Ascending aorta (tissue), 2 donors: ENCODE measurements at regions of chr2 and their contacts with region 1.

Region 1: DNA sequence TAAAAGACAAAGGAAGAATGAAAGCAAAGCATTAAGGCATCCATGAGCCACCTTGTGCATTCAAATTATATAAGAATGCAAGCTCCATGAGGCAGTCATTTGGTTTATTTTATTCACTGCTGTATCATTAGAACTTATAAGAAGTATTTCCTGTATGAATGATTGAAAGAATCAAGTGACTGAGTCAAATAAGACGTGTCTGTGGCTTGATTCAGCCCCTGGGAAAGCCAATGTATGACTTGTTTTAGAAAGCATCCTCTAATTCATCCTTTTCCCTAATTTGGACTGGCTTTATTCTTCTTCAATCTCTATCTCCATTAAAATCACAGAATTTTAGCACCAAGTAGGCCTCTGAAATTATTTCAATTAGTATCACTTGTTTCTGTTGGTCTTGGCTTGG is 461.1 kb downstream of the LPIN1 start:
- DNase-seq: no peak
- H3K4me3 ChIP-seq: no peak overlapping the region
- H3K27ac ChIP-seq: no peak overlapping the region
- H3K4me1 ChIP-seq: no peaks in the 10 kb centered on the region
- H3K27me3 ChIP-seq: no peaks in the 10 kb centered on the region
- CTCF ChIP-seq: no peak

Region 2: DNA sequence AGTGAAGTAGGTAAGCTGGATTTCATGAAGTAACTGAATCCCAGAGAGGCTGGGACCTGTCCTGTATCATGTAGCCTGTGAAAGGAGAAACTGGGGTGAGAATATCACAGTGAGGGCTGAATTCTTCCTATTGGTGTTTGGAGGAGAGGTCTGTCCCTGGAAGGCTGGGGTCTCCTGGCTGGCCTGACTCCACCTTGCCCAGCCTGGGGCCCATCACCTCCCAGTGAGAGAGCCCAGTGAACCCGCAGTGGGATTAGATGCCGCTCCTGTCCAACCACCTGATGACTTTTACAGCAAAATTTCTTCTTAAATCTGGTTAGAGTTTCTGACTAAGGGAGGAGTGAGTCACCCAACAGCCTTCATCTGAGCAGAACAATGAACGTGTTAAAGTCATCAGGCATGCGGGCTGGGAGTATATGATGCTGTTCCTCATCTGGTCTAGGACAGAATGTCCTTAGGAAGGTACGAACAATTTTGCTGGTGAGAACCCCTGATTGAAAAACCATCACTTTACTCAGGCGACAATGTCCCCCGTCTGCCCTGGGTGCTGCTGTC is 308.1 kb before region 1 on chr2:
- intact Hi-C with region 1: no loop called
- DNase-seq: no peak
- H3K4me3 ChIP-seq: no peak overlapping the region
- H3K27ac ChIP-seq: no peak overlapping the region
- H3K4me1 ChIP-seq: no peaks in the 10 kb centered on the region
- H3K27me3 ChIP-seq: no peaks in the 10 kb centered on the region
- CTCF ChIP-seq: no peak

Region 3: DNA sequence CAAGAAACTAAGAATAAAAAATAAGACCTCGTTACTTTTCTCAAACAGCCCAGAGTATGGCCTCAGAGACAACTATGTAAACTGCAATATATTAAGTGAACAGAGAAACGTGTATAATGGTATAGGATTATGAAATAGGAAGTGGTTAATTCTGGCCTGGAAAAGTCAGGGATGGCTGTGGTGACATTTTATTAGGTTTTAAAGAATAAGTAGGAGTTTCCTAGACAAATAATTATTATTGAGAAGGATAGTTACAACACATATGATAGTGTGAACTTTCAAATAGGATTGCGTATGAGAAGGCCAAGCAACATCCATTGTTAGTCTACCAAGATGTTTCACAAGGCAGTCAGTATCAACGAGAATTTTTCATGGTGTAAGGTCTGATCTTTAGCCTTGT is 216.9 kb before region 1 on chr2:
- intact Hi-C with region 1: loop called (anchors 5 kb)
- DNase-seq: no peak
- H3K4me3 ChIP-seq: no peak overlapping the region
- H3K27ac ChIP-seq: no peak overlapping the region
- H3K4me1 ChIP-seq: no peaks in the 10 kb centered on the region
- H3K27me3 ChIP-seq: no peaks in the 10 kb centered on the region
- CTCF ChIP-seq: no peak

Region 4: GRCh38 chr2:12120281-12121150 is 87.0 kb before region 1 on chr2:
- intact Hi-C with region 1: no loop called
- DNase-seq: no peak
- H3K4me3 ChIP-seq: no peak overlapping the region
- H3K27ac ChIP-seq: no peak overlapping the region
- H3K4me1 ChIP-seq: peaks cover 0 to 3% of the 10 kb centered on the region in 2 donors
- H3K27me3 ChIP-seq: no peaks in the 10 kb centered on the region
- CTCF ChIP-seq: no peak

Region 5: GRCh38 chr2:12376025-12376424 is 168.5 kb after region 1 on chr2:
- intact Hi-C with region 1: no loop called
- DNase-seq: no peak
- H3K4me3 ChIP-seq: no peak overlapping the region
- H3K27ac ChIP-seq: no peak overlapping the region
- H3K4me1 ChIP-seq: no peaks in the 10 kb centered on the region
- H3K27me3 ChIP-seq: no peaks in the 10 kb centered on the region
- CTCF ChIP-seq: no peak